Naive thymus-derived CD4-positive, alpha-beta T cell (primary cell): ENCODE measurements at regions of chr13 and their contacts with region 1.

Region 1: GRCh38 chr13:73417015-73417623 is 358.3 kb downstream of the KLF5 start:
- DNase-seq: peak in 1 of 9 donors; percentile 1
- ATAC-seq: no peak
- H3K4me3 ChIP-seq: no peak overlapping the region
- H3K4me3 Mint-ChIP-seq: no peak overlapping the region
- H3K27ac ChIP-seq: no peak overlapping the region
- H3K27ac Mint-ChIP-seq: peak overlapping the region in 1 of 9 donors; percentile 21
- H3K4me1 ChIP-seq: no peaks in the 10 kb centered on the region
- H3K4me1 Mint-ChIP-seq: no peaks in the 10 kb centered on the region
- H3K27me3 ChIP-seq: no peaks in the 10 kb centered on the region
- H3K27me3 Mint-ChIP-seq: no peaks in the 10 kb centered on the region

Region 2: DNA sequence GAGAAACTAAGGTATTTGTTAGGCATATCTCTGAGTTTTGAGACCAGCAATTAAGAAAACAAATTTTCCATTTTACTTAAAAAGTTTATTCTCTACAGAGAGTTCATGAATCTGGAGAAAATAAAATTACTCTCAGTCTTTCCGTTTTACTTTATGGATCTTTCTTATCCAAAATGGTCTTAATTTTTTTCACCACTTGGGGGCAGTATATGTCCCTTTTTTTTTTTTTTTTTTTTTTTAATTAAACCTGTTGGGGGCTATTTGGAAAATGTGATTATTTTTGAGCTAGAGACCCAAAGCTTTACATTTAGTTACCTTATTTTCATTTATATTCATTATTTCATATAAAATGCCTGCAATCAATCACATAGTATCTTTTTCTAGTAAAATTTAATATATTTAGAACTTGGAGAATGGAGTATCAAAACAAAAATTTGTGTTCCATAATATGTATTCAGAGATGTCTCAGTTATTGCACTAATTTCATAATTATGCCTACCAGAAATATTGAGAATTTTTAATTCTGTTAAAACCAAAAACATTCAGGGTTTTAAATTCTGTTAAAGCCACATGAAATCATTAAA is 608.1 kb before region 1 on chr13:
- CTCF ChIA-PET with region 1: no interaction called
- POLR2A ChIA-PET with region 1: no interaction called
- intact Hi-C with region 1: loop called (anchors 5 to 10 kb)
- DNase-seq: peak in 4 of 9 donors; percentile 7 to 22 (median 16)
- ATAC-seq: peak; percentile 51
- H3K4me3 ChIP-seq: no peak overlapping the region
- H3K4me3 Mint-ChIP-seq: no peak overlapping the region
- H3K27ac ChIP-seq: no peak overlapping the region
- H3K27ac Mint-ChIP-seq: peak overlapping the region in 3 of 9 donors; percentile 2 to 82 (median 76)
- H3K4me1 ChIP-seq: no peaks in the 10 kb centered on the region
- H3K4me1 Mint-ChIP-seq: peaks cover 0 to 8% (median 5%) of the 10 kb centered on the region in 7 donors
- H3K27me3 ChIP-seq: no peaks in the 10 kb centered on the region
- H3K27me3 Mint-ChIP-seq: no peaks in the 10 kb centered on the region

Region 3: GRCh38 chr13:72839831-72840426 is 577.2 kb before region 1 on chr13:
- CTCF ChIA-PET with region 1: no interaction called
- POLR2A ChIA-PET with region 1: no interaction called
- intact Hi-C with region 1: loop called in 1 of 2 experiments (anchors 1 kb)
- DNase-seq: peak in 7 of 9 donors; percentile 3 to 42 (median 24)
- ATAC-seq: peak; percentile 71
- H3K4me3 ChIP-seq: no peak overlapping the region
- H3K4me3 Mint-ChIP-seq: no peak overlapping the region
- H3K27ac ChIP-seq: no peak overlapping the region
- H3K27ac Mint-ChIP-seq: no peak overlapping the region
- H3K4me1 ChIP-seq: no peaks in the 10 kb centered on the region
- H3K4me1 Mint-ChIP-seq: peaks cover 0 to 5% (median 0%) of the 10 kb centered on the region in 7 donors
- H3K27me3 ChIP-seq: no peaks in the 10 kb centered on the region
- H3K27me3 Mint-ChIP-seq: no peaks in the 10 kb centered on the region

Region 4: DNA sequence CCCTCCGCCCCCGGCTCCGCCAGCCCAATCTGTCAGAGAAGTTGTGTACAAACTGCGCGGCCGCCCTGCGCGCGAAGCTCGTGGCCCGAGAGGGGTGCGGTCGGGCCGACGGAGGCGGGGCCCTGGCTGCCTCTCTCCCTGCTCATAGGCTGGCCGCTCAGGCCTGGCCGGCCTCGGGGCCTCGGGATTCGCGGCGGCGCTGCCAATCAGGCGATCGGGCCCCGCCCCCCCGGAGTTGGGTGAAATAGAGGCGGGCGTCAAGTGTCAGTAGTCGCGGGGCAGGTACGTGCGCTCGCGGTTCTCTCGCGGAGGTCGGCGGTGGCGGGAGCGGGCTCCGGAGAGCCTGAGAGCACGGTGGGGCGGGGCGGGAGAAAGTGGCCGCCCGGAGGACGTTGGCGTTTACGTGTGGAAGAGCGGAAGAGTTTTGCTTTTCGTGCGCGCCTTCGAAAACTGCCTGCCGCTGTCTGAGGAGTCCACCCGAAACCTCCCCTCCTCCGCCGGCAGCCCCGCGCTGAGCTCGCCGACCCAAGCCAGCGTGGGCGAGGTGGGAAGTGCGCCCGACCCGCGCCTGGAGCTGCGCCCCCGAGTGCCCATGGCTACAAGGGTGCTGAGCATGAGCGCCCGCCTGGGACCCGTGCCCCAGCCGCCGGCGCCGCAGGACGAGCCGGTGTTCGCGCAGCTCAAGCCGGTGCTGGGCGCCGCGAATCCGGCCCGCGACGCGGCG is 358.2 kb before region 1 on chr13 and contains the start of gene KLF5:
- CTCF ChIA-PET with region 1: no interaction called
- POLR2A ChIA-PET with region 1: no interaction called
- intact Hi-C with region 1: loop called in 1 of 2 experiments (anchors 5 kb)
- DNase-seq: peak; percentile 93 to 98 (median 94)
- ATAC-seq: peak; percentile 98
- H3K4me3 ChIP-seq: peak within 1 kb of the TSS; percentile 58
- H3K4me3 Mint-ChIP-seq: peak within 1 kb of the TSS; percentile 82 to 94 (median 90)
- H3K27ac ChIP-seq: peak within 1 kb of the TSS; percentile 42
- H3K27ac Mint-ChIP-seq: peak within 1 kb of the TSS; percentile 38 to 92 (median 79)
- H3K4me1 ChIP-seq: peaks cover 4 to 10% of the 10 kb centered on the region in 2 donors
- H3K4me1 Mint-ChIP-seq: peaks cover 6 to 32% (median 23%) of the 10 kb centered on the region in 7 donors
- H3K27me3 ChIP-seq: peaks cover 5 to 10% of the 10 kb centered on the region in 2 donors
- H3K27me3 Mint-ChIP-seq: peaks cover 19 to 58% (median 40%) of the 10 kb centered on the region in 5 donors
- total RNA-seq, gene KLF5: 3.6 to 13.3 (median 5.7) TPM